Gastrocnemius medialis (tissue), 4 donors: ENCODE measurements at regions of chr7 and their contacts with region 1.

Region 1: GRCh38 chr7:7182156-7183060 is at the start of gene C1GALT1:
- DNase-seq: peak; percentile 95
- ATAC-seq: peak; percentile 90 to 92
- H3K4me3 ChIP-seq: peak within 1 kb of the TSS; percentile 80 to 98 (median 88)
- H3K27ac ChIP-seq: peak within 1 kb of the TSS; percentile 94 to 99 (median 97)
- H3K4me1 ChIP-seq: peaks cover 24 to 29% of the 10 kb centered on the region in 2 donors
- H3K27me3 ChIP-seq: no peaks in the 10 kb centered on the region
- CTCF ChIP-seq: peak in 3 of 5 experiments; percentile 12 to 48 (median 25)
- POLR2A ChIP-seq: peak; percentile 82 to 90
- total RNA-seq, gene C1GALT1: 16.1 to 40.8 (median 27.5) TPM

Region 2: GRCh38 chr7:6556196-6556595 is 626.2 kb before region 1 on chr7:
- in situ Hi-C with region 1: no loop called
- intact Hi-C with region 1: no loop called
- DNase-seq: no peak
- ATAC-seq: no peak
- H3K4me3 ChIP-seq: no peak overlapping the region
- H3K27ac ChIP-seq: no peak overlapping the region
- H3K4me1 ChIP-seq: no peaks in the 10 kb centered on the region
- H3K27me3 ChIP-seq: no peaks in the 10 kb centered on the region
- CTCF ChIP-seq: no peak
- POLR2A ChIP-seq: no peak

Region 3: DNA sequence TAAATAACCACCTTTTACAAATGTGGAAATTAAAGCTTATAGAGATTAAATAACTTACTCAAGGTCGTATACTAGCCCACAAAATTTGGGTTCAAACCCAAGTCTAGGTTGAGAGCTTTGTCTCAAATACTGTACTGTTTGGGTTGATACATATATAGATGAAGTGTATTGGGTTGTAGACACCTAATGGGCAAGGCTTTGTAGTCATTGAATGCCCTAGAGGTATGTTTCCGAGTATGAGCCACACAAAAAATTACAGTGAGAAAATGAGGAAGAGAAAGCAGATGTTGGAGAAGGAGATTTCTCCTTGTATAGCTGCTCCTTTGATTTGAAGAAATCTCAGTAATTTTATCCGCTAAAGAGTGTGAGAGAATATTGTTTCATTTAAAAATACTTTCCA is 60.5 kb after region 1 on chr7:
- in situ Hi-C with region 1: no loop called
- intact Hi-C with region 1: loop called (anchors 5 kb)
- DNase-seq: no peak
- ATAC-seq: no peak
- H3K4me3 ChIP-seq: no peak overlapping the region
- H3K27ac ChIP-seq: no peak overlapping the region
- H3K4me1 ChIP-seq: peaks cover 0 to 22% of the 10 kb centered on the region in 2 donors
- H3K27me3 ChIP-seq: no peaks in the 10 kb centered on the region
- CTCF ChIP-seq: no peak
- POLR2A ChIP-seq: no peak

Region 4: DNA sequence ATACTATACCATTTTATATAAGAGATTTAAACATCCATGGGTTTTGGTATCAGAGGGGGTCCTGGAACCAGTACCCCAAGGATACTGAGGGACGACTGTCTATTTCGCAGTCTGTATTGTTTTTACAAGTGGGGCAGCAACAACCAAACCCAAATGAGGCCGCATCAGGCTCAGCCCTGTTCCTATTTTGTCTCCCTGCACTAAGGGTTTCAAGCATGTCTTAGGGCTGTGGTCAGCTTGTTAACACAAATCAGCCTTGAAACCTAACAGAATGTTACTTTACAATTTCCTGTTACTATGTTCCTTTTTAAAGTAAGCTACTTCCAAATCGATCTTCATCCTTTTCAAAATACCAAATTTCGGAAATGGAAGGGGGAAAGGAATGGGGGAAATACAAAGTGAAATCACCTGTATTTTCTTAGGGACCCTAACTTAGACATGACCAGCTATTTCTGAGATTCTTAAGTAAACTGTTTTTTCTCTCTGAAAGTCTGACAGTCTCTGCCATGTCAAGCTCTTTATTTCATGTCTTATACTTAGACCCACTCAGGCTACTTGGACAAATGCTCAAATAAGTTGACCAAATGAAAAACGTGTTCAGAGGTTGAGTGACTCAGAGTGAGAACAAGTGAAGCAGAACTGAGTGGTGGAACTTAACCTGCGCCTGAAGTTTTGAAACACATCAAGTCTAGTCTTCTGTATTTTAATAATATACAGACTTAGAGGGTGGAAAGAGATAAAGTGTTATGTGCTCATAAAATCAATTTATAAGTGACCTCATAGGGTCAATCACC is 75.7 kb after region 1 on chr7:
- in situ Hi-C with region 1: no loop called
- intact Hi-C with region 1: loop called (anchors 5 kb)
- DNase-seq: no peak
- ATAC-seq: no peak
- H3K4me3 ChIP-seq: no peak overlapping the region
- H3K27ac ChIP-seq: no peak overlapping the region
- H3K4me1 ChIP-seq: peaks cover 8 to 12% of the 10 kb centered on the region in 2 donors
- H3K27me3 ChIP-seq: no peaks in the 10 kb centered on the region
- CTCF ChIP-seq: no peak
- POLR2A ChIP-seq: no peak

Region 5: GRCh38 chr7:7566651-7567611 is 384.5 kb after region 1 on chr7 and contains the start of gene MIOS:
- in situ Hi-C with region 1: loop called in 1 of 4 experiments (anchors 25 kb)
- intact Hi-C with region 1: loop called (anchors 1 kb)
- DNase-seq: peak; percentile 89 to 90
- ATAC-seq: peak; percentile 66 to 67
- H3K4me3 ChIP-seq: peak within 1 kb of the TSS; percentile 67 to 85 (median 80)
- H3K27ac ChIP-seq: peak within 1 kb of the TSS; percentile 90 to 98 (median 96)
- H3K4me1 ChIP-seq: peaks cover 33 to 76% of the 10 kb centered on the region in 2 donors
- H3K27me3 ChIP-seq: no peaks in the 10 kb centered on the region
- CTCF ChIP-seq: peak in 1 of 5 experiments; percentile 18
- POLR2A ChIP-seq: peak; percentile 82 to 92
- total RNA-seq, gene MIOS: 68.4 to 336 (median 280) TPM

Region 6: GRCh38 chr7:7968543-7969305 is 786.3 kb after region 1 on chr7 and contains the start of gene GLCCI1:
- in situ Hi-C with region 1: no loop called
- intact Hi-C with region 1: loop called (anchors 2 kb)
- DNase-seq: peak; percentile 97
- ATAC-seq: peak; percentile 96 to 97
- H3K4me3 ChIP-seq: peak within 1 kb of the TSS; percentile 83 to 93 (median 86)
- H3K27ac ChIP-seq: peak within 1 kb of the TSS; percentile 91 to 98 (median 93)
- H3K4me1 ChIP-seq: peaks cover 13 to 22% of the 10 kb centered on the region in 2 donors
- H3K27me3 ChIP-seq: no peaks in the 10 kb centered on the region
- CTCF ChIP-seq: no peak
- POLR2A ChIP-seq: peak; percentile 79 to 95
- total RNA-seq, gene GLCCI1: 1.2 to 6.1 (median 2.6) TPM